ENCODE measurements at regions of chr3 and their contacts with region 1.

Region 1: DNA sequence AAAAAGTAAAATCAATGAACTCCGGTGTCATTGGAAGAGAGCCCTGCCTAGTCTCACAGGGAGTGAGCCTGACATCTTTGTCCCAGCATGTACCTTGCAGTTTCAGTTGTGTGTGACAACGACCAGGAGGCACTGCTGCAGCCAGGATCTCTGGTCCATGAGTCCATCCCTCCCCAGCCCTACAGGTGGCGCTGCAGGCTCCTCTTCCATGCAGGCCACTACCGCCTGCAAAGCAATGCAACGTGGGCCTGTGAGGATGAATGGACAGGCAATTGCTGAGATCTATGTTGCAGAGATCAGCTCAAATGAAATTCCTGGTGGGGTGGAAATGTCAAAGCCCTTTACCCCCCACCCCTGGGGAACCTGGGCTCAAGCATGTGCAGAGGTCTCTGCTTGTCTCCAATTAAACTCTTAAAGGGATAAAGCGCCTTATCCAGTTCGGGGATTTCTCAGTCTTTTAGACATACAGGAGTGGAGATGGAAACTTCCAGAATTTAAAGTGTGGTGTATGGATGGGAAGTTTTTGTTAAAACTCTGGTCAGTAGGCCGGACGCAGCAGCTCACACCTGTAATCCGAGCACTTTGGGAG is 35.8 kb downstream of the TKT start:
- DNase-seq: peak; percentile 94
- ATAC-seq: peak; percentile 95
- H3K4me3 ChIP-seq: no peak overlapping the region
- H3K27ac ChIP-seq: no peak overlapping the region
- H3K4me1 ChIP-seq: no peaks in the 10 kb centered on the region
- H3K27me3 ChIP-seq: no peaks in the 10 kb centered on the region
- CTCF ChIP-seq: peak; percentile 97

Region 2: DNA sequence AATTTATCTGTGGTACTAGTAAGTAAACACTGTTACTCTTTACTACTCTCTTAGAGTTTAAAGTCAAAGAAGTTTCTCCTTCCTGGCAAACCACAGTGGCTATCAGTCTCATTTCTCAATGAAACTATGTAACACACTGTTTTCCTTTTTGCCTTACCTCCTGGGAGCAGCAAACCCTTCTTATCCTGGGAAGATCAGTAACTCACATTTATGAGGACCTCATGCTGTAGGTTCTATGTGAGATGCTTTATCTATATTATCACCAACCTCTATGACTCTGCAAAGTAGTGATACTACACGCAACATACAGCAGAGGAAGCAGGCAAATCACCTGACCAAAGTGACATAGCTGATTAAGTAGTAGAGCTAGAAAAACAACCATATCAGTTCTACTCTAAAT is 569.5 kb before region 1 on chr3:
- CTCF ChIA-PET with region 1: no interaction called
- POLR2A ChIA-PET with region 1: no interaction called
- intact Hi-C with region 1: no loop called
- DNase-seq: no peak
- ATAC-seq: no peak
- H3K4me3 ChIP-seq: no peak overlapping the region
- H3K27ac ChIP-seq: no peak overlapping the region
- H3K4me1 ChIP-seq: no peaks in the 10 kb centered on the region
- H3K27me3 ChIP-seq: no peaks in the 10 kb centered on the region
- CTCF ChIP-seq: no peak

Region 3: DNA sequence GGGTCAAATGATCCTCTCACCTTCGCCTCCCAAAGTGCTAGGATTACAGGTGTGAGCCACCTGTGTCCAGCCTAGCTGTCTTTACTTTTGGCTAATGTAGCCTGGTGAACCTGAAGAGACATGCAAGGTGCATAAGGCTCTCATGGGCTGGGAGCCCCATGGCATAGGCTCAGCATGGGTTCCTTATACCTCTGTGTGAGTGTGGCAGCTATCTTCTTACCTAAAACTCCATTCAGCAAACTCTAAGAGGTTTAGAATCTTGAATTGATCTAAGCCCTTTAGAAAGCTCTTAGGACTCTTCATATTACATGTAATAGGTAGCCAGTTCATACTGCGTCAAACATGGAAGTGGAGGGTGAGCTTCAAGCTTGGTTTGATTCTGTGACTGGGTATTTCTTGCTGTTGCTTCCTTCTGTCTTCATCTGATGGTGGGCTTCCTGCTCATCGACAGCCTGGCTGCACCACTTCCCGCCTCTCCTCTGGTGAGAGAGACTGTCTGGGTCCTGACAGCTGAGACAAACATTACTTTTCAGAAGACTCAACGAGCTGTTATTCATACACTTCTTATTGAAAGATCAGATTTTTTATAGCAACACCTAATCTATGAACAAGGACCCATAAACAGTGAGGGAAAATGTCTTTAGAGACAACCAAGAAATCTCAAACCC is 55.1 kb after region 1 on chr3:
- CTCF ChIA-PET with region 1: no interaction called
- POLR2A ChIA-PET with region 1: no interaction called
- intact Hi-C with region 1: loop called (anchors 1 kb)
- DNase-seq: no peak
- ATAC-seq: no peak
- H3K4me3 ChIP-seq: no peak overlapping the region
- H3K27ac ChIP-seq: no peak overlapping the region
- H3K4me1 ChIP-seq: peaks cover 8% of the 10 kb centered on the region
- H3K27me3 ChIP-seq: no peaks in the 10 kb centered on the region
- CTCF ChIP-seq: no peak